ENCODE measurements at regions of chr13 and their contacts with region 1.

Region 1: GRCh38 chr13:42048682-42049453 is 420 bp downstream of the DGKH start:
- DNase-seq: peak; percentile 75
- H3K4me3 Mint-ChIP-seq: peak overlapping the region; percentile 88
- H3K27ac Mint-ChIP-seq: no peak overlapping the region
- H3K4me1 Mint-ChIP-seq: no peaks in the 10 kb centered on the region
- H3K27me3 Mint-ChIP-seq: no peaks in the 10 kb centered on the region
- CTCF ChIP-seq: no peak

Region 2: DNA sequence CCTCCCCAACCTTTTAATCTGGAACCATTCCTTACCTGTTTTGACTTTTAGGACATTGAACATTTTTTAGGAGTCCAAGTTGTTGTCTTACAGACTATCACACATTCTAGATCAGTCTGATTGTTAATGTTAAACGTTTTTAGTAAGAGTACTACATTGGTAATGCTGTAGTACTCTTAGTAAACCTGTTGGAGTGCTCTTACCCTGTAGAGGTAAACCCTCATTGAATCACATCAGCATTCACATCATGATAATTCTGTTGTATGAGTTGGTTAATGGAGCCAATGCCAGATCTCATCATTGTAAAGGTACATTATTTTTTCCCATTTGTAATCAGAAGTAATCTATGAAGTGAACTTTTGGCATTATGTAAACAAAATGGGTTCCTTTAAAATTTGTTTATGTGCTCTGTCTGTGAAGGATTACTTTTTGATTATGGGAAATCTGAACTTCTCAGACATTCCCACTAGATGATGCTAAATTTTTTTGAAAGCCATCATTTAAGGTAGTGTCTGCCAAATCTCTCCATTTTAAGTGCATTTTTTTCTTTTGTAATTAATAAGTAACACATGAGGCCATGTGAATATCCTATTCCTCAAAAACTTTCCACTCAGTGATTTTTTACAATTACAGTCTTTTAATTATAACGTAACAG is 143.1 kb before region 1 on chr13:
- CTCF ChIA-PET with region 1: interaction called, 8 read pairs
- intact Hi-C with region 1: loop called (anchors 2 kb)
- DNase-seq: no peak
- H3K4me3 Mint-ChIP-seq: no peak overlapping the region
- H3K27ac Mint-ChIP-seq: no peak overlapping the region
- H3K4me1 Mint-ChIP-seq: no peaks in the 10 kb centered on the region
- H3K27me3 Mint-ChIP-seq: no peaks in the 10 kb centered on the region
- CTCF ChIP-seq: no peak

Region 3: GRCh38 chr13:42110410-42111155 is 61.7 kb after region 1 on chr13:
- CTCF ChIA-PET with region 1: interaction called, 4 read pairs
- intact Hi-C with region 1: loop called (anchors 2 kb)
- DNase-seq: peak; percentile 24
- H3K4me3 Mint-ChIP-seq: no peak overlapping the region
- H3K27ac Mint-ChIP-seq: no peak overlapping the region
- H3K4me1 Mint-ChIP-seq: peaks cover 42% of the 10 kb centered on the region
- H3K27me3 Mint-ChIP-seq: no peaks in the 10 kb centered on the region
- CTCF ChIP-seq: no peak